A673 (cell line): ENCODE measurements at regions of chr5 and their contacts with region 1.

Region 1: GRCh38 chr5:108345541-108346171 is 36.2 kb downstream of the FBXL17 start:
- DNase-seq: peak; percentile 69
- H3K4me3 ChIP-seq: no peak overlapping the region
- H3K27ac ChIP-seq: no peak overlapping the region
- H3K4me1 ChIP-seq: no peaks in the 10 kb centered on the region
- H3K27me3 ChIP-seq: no peaks in the 10 kb centered on the region
- CTCF ChIP-seq: peak; percentile 53

Region 2: DNA sequence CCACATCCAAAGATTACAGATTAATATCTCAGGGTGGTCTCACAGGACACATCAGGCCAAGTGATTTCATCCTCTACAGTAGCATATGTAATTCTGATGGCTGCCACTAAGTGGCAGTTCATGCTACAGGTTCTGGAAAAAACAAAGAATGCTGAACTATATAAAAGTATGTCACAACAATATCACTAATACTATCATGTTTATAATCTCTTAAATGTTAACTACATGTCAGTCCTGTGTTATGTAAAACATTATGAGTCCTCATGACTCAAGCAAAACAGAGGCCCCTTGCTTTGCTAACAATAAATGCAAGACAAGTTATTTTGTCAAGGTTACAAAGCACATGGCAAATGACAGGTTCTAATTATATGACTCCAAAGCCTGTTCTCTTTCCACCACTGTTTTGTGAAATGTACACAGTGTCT is 196.9 kb before region 1 on chr5:
- CTCF ChIA-PET with region 1: interaction called, 4 read pairs
- POLR2A ChIA-PET with region 1: no interaction called
- intact Hi-C with region 1: loop called (anchors 5 kb)
- DNase-seq: peak; percentile 15
- H3K4me3 ChIP-seq: no peak overlapping the region
- H3K27ac ChIP-seq: no peak overlapping the region
- H3K4me1 ChIP-seq: no peaks in the 10 kb centered on the region
- H3K27me3 ChIP-seq: no peaks in the 10 kb centered on the region
- CTCF ChIP-seq: peak; percentile 62

Region 3: GRCh38 chr5:108260117-108260857 is 85.4 kb before region 1 on chr5:
- CTCF ChIA-PET with region 1: interaction called, 26 read pairs
- POLR2A ChIA-PET with region 1: no interaction called
- intact Hi-C with region 1: loop called (anchors 2 kb)
- DNase-seq: peak; percentile 78
- H3K4me3 ChIP-seq: no peak overlapping the region
- H3K27ac ChIP-seq: no peak overlapping the region
- H3K4me1 ChIP-seq: no peaks in the 10 kb centered on the region
- H3K27me3 ChIP-seq: no peaks in the 10 kb centered on the region
- CTCF ChIP-seq: peak; percentile 93

Region 4: GRCh38 chr5:108531367-108532128 is 185.9 kb after region 1 on chr5:
- CTCF ChIA-PET with region 1: no interaction called
- POLR2A ChIA-PET with region 1: no interaction called
- intact Hi-C with region 1: no loop called
- DNase-seq: no peak
- H3K4me3 ChIP-seq: no peak overlapping the region
- H3K27ac ChIP-seq: no peak overlapping the region
- H3K4me1 ChIP-seq: no peaks in the 10 kb centered on the region
- H3K27me3 ChIP-seq: no peaks in the 10 kb centered on the region
- CTCF ChIP-seq: no peak